Activated CD8-positive, alpha-beta T cell treated with anti-CD3 and anti-CD28 coated beads for 36 hours (primary cell): ENCODE measurements at regions of chr5 and their contacts with region 1.

Region 1: DNA sequence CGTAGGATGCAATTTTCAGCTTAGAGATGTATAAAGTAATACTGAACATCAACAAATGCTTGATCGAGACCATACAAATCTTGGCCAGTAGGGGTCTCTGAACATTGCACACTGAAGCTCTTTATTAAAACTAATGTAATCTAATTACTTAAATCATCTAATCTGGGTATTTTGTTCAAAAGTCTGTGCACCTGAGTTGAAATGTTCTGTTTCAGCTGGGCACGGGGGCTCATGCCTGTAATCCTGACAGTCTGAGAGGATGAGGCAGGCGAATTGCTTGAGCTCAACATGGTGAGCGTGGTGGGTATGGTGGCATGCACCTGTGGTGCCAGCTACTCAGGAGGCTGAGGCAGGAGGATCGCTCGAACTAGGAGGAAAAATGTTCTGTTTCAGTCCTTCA is 41.0 kb downstream of the ESM1 start:
- DNase-seq: peak; percentile 59
- ATAC-seq: peak; percentile 67
- H3K4me3 Mint-ChIP-seq: no peak overlapping the region
- H3K27ac Mint-ChIP-seq: no peak overlapping the region
- H3K4me1 Mint-ChIP-seq: no peaks in the 10 kb centered on the region
- H3K27me3 Mint-ChIP-seq: peaks cover 1% of the 10 kb centered on the region
- CTCF ChIP-seq: peak; percentile 86

Region 2: DNA sequence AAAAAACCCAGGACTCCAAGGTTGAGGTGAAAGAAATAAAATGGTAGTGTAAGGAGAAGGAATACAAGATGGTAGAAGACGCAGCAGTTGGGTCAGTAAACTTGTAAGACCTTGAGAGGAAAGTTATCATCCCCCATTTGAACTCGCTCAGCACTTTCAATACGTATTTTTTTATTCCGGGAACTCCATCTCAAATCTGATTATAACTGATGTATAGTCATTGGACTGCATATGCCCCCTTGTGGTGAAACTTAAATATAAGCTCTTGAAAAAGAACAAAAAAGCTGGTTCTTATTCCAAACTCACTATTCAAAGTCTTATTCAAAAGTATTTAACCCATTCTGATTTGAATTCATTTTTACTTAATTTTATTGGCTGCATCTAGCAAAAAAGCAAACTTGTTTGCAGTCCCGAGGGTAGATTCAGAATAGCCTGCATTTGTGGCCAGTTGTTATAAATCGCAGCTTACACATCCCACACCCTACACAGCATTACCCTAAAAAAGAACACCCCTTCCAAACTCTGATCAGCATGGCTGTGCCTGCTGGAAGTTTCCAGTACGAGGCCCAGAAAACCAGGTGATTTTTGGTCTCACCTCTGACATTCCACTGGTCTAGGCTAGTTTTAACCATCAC is 76.9 kb before region 1 on chr5:
- CTCF ChIA-PET with region 1: interaction called, 14 read pairs
- POLR2A ChIA-PET with region 1: no interaction called
- intact Hi-C with region 1: no loop called
- DNase-seq: no peak
- ATAC-seq: peak; percentile 17
- H3K4me3 Mint-ChIP-seq: no peak overlapping the region
- H3K27ac Mint-ChIP-seq: no peak overlapping the region
- H3K4me1 Mint-ChIP-seq: peaks cover 27% of the 10 kb centered on the region
- H3K27me3 Mint-ChIP-seq: peaks cover 24% of the 10 kb centered on the region
- CTCF ChIP-seq: peak; percentile 71

Region 3: GRCh38 chr5:54959673-54960418 is 15.5 kb after region 1 on chr5:
- CTCF ChIA-PET with region 1: interaction called, 97 read pairs
- POLR2A ChIA-PET with region 1: interaction called, 3 read pairs
- intact Hi-C with region 1: no loop called
- DNase-seq: peak; percentile 72
- ATAC-seq: no peak
- H3K4me3 Mint-ChIP-seq: no peak overlapping the region
- H3K27ac Mint-ChIP-seq: no peak overlapping the region
- H3K4me1 Mint-ChIP-seq: peaks cover 2% of the 10 kb centered on the region
- H3K27me3 Mint-ChIP-seq: peaks cover 4% of the 10 kb centered on the region
- CTCF ChIP-seq: peak; percentile 53

Region 4: GRCh38 chr5:55021410-55021809 is 77.0 kb after region 1 on chr5:
- CTCF ChIA-PET with region 1: interaction called, 14 read pairs
- POLR2A ChIA-PET with region 1: no interaction called
- intact Hi-C with region 1: no loop called
- DNase-seq: no peak
- ATAC-seq: no peak
- H3K4me3 Mint-ChIP-seq: no peak overlapping the region
- H3K27ac Mint-ChIP-seq: peak overlapping the region; percentile 6
- H3K4me1 Mint-ChIP-seq: peaks cover 35% of the 10 kb centered on the region
- H3K27me3 Mint-ChIP-seq: no peaks in the 10 kb centered on the region
- CTCF ChIP-seq: no peak

Region 5: GRCh38 chr5:55062039-55062779 is 117.8 kb after region 1 on chr5:
- CTCF ChIA-PET with region 1: interaction called, 23 read pairs
- POLR2A ChIA-PET with region 1: no interaction called
- intact Hi-C with region 1: no loop called
- DNase-seq: peak; percentile 82
- ATAC-seq: peak; percentile 80
- H3K4me3 Mint-ChIP-seq: peak overlapping the region; percentile 70
- H3K27ac Mint-ChIP-seq: peak overlapping the region; percentile 94
- H3K4me1 Mint-ChIP-seq: peaks cover 61% of the 10 kb centered on the region
- H3K27me3 Mint-ChIP-seq: peaks cover 2% of the 10 kb centered on the region
- CTCF ChIP-seq: no peak

Region 6: GRCh38 chr5:55146543-55147151 is 202.3 kb after region 1 on chr5:
- CTCF ChIA-PET with region 1: interaction called, 50 read pairs
- POLR2A ChIA-PET with region 1: no interaction called
- intact Hi-C with region 1: loop called (anchors 1 kb)
- DNase-seq: peak; percentile 89
- ATAC-seq: peak; percentile 67
- H3K4me3 Mint-ChIP-seq: no peak overlapping the region
- H3K27ac Mint-ChIP-seq: no peak overlapping the region
- H3K4me1 Mint-ChIP-seq: peaks cover 13% of the 10 kb centered on the region
- H3K27me3 Mint-ChIP-seq: peaks cover 6% of the 10 kb centered on the region
- CTCF ChIP-seq: peak; percentile 98